ENCODE measurements at regions of chr13 and their contacts with region 1.

Region 1: DNA sequence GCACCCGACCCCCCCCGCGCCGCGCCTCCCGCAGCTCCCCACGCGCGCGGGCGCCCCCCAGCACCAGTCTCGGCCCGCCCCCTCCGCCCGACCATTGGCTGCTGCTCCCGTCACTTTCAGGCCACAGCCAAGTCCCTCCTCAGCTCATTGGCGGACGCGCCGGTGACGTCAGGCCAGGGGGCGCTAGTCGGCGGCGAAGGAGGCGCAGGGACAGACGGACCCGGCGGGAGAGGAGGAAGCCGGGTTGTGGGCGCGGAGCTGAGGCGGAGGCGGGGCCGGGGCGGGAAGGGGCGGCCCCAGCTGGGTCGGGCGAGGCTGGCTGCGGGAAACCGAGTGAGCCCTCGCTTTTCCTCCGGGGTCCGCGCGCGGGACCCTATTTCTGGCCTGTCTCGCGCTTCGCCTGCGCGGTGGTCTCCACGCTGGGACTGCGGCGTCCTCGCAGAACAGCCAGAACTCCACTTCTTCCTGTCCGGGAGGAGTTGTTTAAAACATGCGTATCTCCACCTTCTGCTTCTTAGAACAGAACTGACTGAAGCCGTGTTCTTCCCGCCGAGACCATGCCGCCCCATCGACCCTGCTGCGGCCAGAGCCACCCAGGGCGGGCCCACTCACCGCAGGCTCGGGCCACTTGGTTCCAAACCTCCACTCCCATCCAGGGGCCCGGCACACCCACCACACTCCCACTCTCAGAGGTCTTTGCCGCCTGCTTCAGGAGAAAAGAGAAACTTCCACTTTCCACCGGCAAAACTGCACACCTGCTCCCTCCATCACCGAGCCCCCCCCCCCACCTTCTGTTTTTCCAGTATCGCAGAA is 459 bp upstream of the TMTC4 start:
- DNase-seq: peak; percentile 100
- ATAC-seq: peak; percentile 93
- H3K4me3 Mint-ChIP-seq: peak overlapping the region; percentile 84
- H3K27ac Mint-ChIP-seq: peak overlapping the region; percentile 77
- H3K4me1 Mint-ChIP-seq: peaks cover 18% of the 10 kb centered on the region
- H3K27me3 Mint-ChIP-seq: no peaks in the 10 kb centered on the region
- CTCF ChIP-seq: no peak

Region 2: DNA sequence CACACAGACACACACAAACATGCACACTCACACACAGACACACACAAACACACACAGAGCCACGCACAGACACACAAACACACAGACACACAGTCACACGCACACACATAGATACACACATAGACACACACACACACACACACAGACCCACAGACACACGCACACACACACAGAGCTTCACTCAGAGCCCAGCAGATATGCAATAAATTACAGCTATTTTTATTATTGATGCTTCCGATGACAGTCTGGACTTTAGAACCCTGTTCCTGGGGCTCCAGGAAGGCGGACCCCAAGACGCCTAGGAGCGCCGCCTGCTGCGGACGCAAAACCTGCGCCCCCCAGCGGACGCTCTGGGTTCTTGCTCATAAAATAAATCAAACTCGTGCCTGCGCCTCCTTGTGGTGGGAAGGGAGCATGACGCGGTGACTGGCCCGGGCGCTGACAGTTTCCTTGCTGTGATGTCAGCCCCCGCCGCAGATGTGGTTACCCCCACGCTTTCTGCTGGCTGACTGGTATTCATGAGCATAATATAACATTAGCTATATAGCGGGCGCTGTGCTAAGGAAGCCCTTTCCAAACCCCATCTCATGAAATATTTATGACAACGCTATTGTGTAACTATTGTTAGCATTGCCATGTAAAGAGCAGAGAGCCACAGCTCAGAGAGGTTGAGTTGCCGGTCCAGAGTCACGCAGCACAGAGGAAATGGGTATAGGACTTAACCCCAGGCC is 1238.2 kb before region 1 on chr13:
- CTCF ChIA-PET with region 1: no interaction called
- POLR2A ChIA-PET with region 1: no interaction called
- intact Hi-C with region 1: loop called (anchors 10 kb)
- DNase-seq: peak; percentile 87
- ATAC-seq: peak; percentile 59
- H3K4me3 Mint-ChIP-seq: peak overlapping the region; percentile 66
- H3K27ac Mint-ChIP-seq: peak overlapping the region; percentile 76
- H3K4me1 Mint-ChIP-seq: peaks cover 66% of the 10 kb centered on the region
- H3K27me3 Mint-ChIP-seq: peaks cover 2% of the 10 kb centered on the region
- CTCF ChIP-seq: peak; percentile 99

Region 3: GRCh38 chr13:100088644-100089464 is 586.2 kb before region 1 on chr13 and contains the start of gene PCCA:
- CTCF ChIA-PET with region 1: no interaction called
- POLR2A ChIA-PET with region 1: no interaction called
- intact Hi-C with region 1: loop called (anchors 10 kb)
- DNase-seq: peak; percentile 72
- ATAC-seq: peak; percentile 94
- H3K4me3 Mint-ChIP-seq: peak within 1 kb of the TSS; percentile 82
- H3K27ac Mint-ChIP-seq: peak within 1 kb of the TSS; percentile 37
- H3K4me1 Mint-ChIP-seq: peaks cover 16% of the 10 kb centered on the region
- H3K27me3 Mint-ChIP-seq: no peaks in the 10 kb centered on the region
- CTCF ChIP-seq: no peak
- total RNA-seq, gene PCCA: 11.4 and 15.3 TPM in 2 replicates

Region 4: GRCh38 chr13:100588331-100589177 is 86.5 kb before region 1 on chr13 and contains the start of gene GGACT:
- CTCF ChIA-PET with region 1: no interaction called
- POLR2A ChIA-PET with region 1: interaction called, 4 read pairs
- intact Hi-C with region 1: loop called (anchors 1 kb)
- DNase-seq: peak; percentile 80
- ATAC-seq: peak; percentile 95
- H3K4me3 Mint-ChIP-seq: peak within 1 kb of the TSS; percentile 80
- H3K27ac Mint-ChIP-seq: peak within 1 kb of the TSS; percentile 65
- H3K4me1 Mint-ChIP-seq: peaks cover 14% of the 10 kb centered on the region
- H3K27me3 Mint-ChIP-seq: no peaks in the 10 kb centered on the region
- CTCF ChIP-seq: no peak
- total RNA-seq, gene GGACT: 6.5 and 7.5 TPM in 2 replicates

Region 5: GRCh38 chr13:101626925-101627555 is 952.0 kb after region 1 on chr13:
- CTCF ChIA-PET with region 1: no interaction called
- POLR2A ChIA-PET with region 1: no interaction called
- intact Hi-C with region 1: loop called (anchors 10 kb)
- DNase-seq: no peak
- ATAC-seq: peak; percentile 88
- H3K4me3 Mint-ChIP-seq: peak overlapping the region; percentile 68
- H3K27ac Mint-ChIP-seq: peak overlapping the region; percentile 64
- H3K4me1 Mint-ChIP-seq: peaks cover 44% of the 10 kb centered on the region
- H3K27me3 Mint-ChIP-seq: peaks cover 2% of the 10 kb centered on the region
- CTCF ChIP-seq: no peak

Region 6: GRCh38 chr13:102580552-102581169 is 1905.6 kb after region 1 on chr13:
- CTCF ChIA-PET with region 1: no interaction called
- POLR2A ChIA-PET with region 1: no interaction called
- intact Hi-C with region 1: loop called (anchors 5 kb)
- DNase-seq: no peak
- ATAC-seq: peak; percentile 66
- H3K4me3 Mint-ChIP-seq: no peak overlapping the region
- H3K27ac Mint-ChIP-seq: no peak overlapping the region
- H3K4me1 Mint-ChIP-seq: peaks cover 9% of the 10 kb centered on the region
- H3K27me3 Mint-ChIP-seq: peaks cover 7% of the 10 kb centered on the region
- CTCF ChIP-seq: peak; percentile 43

Measured in activated B cell treated with CpG ODN at 0.5 μM for 24 hours (primary cell).